ENCODE measurements at regions of chr10 and their contacts with region 1.

Region 1: GRCh38 chr10:128116851-128117615 is 9.2 kb downstream of the MKI67 start:
- DNase-seq: no peak
- H3K4me3 ChIP-seq: no peak overlapping the region
- H3K27ac ChIP-seq: no peak overlapping the region
- H3K4me1 ChIP-seq: no peaks in the 10 kb centered on the region
- H3K27me3 ChIP-seq: peaks cover 0 to under 1% (median 0%) of the 10 kb centered on the region in 4 experiments; a peak in 1 of 7 replicates
- CTCF ChIP-seq: peak; percentile 58 to 76 (median 63)
- EP300 ChIP-seq: no peak
- POLR2A ChIP-seq: no peak
- RAD21 ChIP-seq: peak; percentile 31 to 37

Region 2: GRCh38 chr10:128102480-128103228 is 14.4 kb before region 1 on chr10:
- CTCF ChIA-PET with region 1: interaction called, 20 read pairs
- POLR2A ChIA-PET with region 1: interaction called, 3 read pairs
- DNase-seq: no peak
- H3K4me3 ChIP-seq: no peak overlapping the region
- H3K27ac ChIP-seq: no peak overlapping the region
- H3K4me1 ChIP-seq: no peaks in the 10 kb centered on the region
- H3K27me3 ChIP-seq: no peaks in the 10 kb centered on the region
- CTCF ChIP-seq: no peak
- EP300 ChIP-seq: no peak
- POLR2A ChIP-seq: no peak
- RAD21 ChIP-seq: no peak